CD4-positive, alpha-beta memory T cell (primary cell): ENCODE measurements at regions of chr4 and their contacts with region 1.

Region 1: GRCh38 chr4:38663801-38664705 is at the start of gene KLF3:
- DNase-seq: peak; percentile 93 to 96 (median 94)
- H3K4me3 ChIP-seq: peak within 1 kb of the TSS; percentile 83 to 92
- H3K4me3 Mint-ChIP-seq: peak within 1 kb of the TSS; percentile 89 to 100 (median 98)
- H3K27ac ChIP-seq: peak within 1 kb of the TSS; percentile 92
- H3K27ac Mint-ChIP-seq: peak within 1 kb of the TSS; percentile 91 to 100 (median 99)
- H3K4me1 ChIP-seq: peaks cover 46% of the 10 kb centered on the region
- H3K4me1 Mint-ChIP-seq: peaks cover 40 to 80% (median 56%) of the 10 kb centered on the region in 4 donors
- H3K27me3 ChIP-seq: no peaks in the 10 kb centered on the region
- H3K27me3 Mint-ChIP-seq: no peaks in the 10 kb centered on the region
- total RNA-seq, gene KLF3: 119 to 122 TPM

Region 2: DNA sequence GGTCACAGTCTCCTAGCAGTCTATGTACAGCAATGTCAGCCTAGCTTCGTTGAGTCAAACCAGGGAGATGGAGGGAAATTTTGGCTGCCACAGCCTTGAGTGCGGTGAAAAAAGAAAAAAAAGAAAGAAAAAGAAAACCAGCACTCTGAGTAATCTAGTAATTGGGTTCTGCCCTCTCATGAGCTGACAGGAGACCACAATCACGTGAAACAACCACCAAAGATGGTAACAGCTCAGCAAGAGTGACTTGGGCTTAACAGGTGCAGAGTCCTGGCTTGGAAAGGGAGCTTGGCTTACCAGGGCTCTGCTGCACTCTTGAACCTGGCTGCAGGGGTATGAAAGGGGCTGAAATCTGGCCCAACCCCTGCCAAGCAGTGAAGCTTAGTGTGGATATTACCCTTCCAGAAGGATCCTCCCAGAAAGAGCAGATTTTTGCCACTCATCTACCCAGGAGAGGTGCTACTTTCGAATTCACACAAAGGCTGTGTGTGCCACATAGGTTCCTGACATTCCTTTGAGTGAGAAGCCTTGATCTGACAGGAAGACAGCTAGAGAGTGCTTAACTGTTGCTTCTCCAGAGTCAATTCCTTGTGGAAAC is 353.5 kb before region 1 on chr4:
- CTCF ChIA-PET with region 1: interaction called, 4 read pairs
- POLR2A ChIA-PET with region 1: interaction called, 70 read pairs
- intact Hi-C with region 1: no loop called
- DNase-seq: peak; percentile 83 to 91 (median 86)
- H3K4me3 ChIP-seq: peak overlapping the region in 1 of 2 donors; percentile 41
- H3K4me3 Mint-ChIP-seq: peak overlapping the region; percentile 64 to 88 (median 76)
- H3K27ac ChIP-seq: peak overlapping the region; percentile 33
- H3K27ac Mint-ChIP-seq: peak overlapping the region; percentile 84 to 96 (median 92)
- H3K4me1 ChIP-seq: peaks cover 53% of the 10 kb centered on the region
- H3K4me1 Mint-ChIP-seq: peaks cover 39 to 71% (median 54%) of the 10 kb centered on the region in 4 donors
- H3K27me3 ChIP-seq: no peaks in the 10 kb centered on the region
- H3K27me3 Mint-ChIP-seq: no peaks in the 10 kb centered on the region

Region 3: DNA sequence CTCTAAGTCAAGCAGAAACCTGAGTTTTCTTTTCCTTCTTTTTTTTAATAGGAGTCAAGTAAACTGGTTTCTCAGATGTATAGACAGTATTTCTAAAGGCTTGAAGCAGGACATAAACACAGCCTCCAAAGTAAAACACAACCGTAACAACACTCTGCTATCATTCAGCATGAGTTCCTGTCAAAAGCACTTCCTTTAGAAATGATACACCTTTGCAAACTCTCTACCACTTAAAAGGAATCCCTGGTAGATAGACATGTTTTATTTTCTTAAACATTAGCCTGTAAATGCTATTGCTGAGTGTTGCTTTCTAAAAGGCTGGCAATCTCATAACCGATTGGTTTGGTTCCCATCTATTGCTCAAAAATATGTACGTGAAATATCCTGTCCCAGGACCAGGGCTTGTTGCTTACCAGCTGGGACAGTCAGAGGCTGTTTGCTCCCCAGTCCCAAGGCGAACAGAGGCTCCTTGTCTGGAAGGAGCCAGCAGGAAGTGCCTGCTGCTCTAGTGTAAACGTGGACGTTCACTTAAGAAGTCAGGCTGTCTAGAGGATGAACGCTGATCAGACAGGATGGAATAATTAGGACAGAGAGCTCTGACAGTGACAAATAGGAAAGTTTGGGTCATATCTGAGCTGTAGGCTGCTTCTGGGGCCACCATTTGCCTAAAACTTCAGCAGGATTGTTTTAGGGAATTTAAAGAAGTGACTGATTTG is 174.0 kb before region 1 on chr4:
- CTCF ChIA-PET with region 1: interaction called, 3 read pairs
- POLR2A ChIA-PET with region 1: interaction called, 10 read pairs
- intact Hi-C with region 1: no loop called
- DNase-seq: peak in 4 of 5 donors; percentile 22 to 40 (median 34)
- H3K4me3 ChIP-seq: peak overlapping the region in 1 of 2 donors; percentile 24
- H3K4me3 Mint-ChIP-seq: peak overlapping the region; percentile 51 to 86 (median 76)
- H3K27ac ChIP-seq: peak overlapping the region; percentile 19
- H3K27ac Mint-ChIP-seq: peak overlapping the region; percentile 86 to 94 (median 93)
- H3K4me1 ChIP-seq: peaks cover 44% of the 10 kb centered on the region
- H3K4me1 Mint-ChIP-seq: peaks cover 30 to 45% (median 34%) of the 10 kb centered on the region in 4 donors
- H3K27me3 ChIP-seq: no peaks in the 10 kb centered on the region
- H3K27me3 Mint-ChIP-seq: no peaks in the 10 kb centered on the region

Region 4: DNA sequence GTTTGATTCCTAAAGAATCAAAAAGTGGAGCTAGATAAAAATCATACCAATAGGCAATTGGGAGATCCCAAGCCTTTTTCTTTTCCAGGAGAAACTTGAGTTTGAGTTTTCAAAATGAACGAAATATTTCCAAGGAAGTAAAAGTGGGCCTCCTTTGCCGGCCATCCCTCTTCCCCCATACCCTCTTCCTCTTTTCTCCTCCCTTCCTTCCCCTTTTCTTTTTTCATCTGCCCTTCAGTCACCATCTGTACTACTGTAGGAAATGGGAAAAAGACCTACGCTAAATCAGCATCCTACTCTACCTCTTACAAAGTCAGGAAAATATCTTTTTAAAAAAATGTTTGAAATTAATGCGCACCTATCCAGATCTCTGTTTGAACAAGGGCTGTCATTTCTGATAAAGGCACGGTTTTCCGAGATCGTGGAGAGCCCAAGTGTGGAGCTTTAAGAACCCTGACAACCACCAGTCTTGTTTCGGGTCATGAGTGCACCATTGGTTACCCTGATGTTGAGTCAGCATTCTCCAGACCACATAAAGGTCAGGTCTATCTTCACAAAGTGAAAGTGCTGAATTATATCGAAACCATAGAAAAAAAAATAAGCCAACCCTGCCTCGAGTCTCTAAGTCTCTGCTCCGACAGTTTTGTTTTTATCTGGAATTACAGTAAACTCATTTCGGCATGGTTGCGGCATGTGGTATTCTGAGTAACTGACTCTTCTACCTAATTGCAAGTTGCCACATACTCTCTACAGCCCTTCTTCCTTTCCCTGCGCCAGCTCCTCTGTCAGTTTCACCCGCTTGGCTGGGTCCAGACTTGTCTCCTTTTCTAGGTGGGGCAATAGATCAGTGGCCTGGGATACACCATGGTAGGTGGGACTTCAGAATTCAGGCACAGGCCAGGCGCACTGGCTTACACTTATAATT is 140.3 kb before region 1 on chr4:
- CTCF ChIA-PET with region 1: interaction called, 3 read pairs
- POLR2A ChIA-PET with region 1: interaction called, 41 read pairs
- intact Hi-C with region 1: no loop called
- DNase-seq: peak; percentile 52 to 73 (median 63)
- H3K4me3 ChIP-seq: peak overlapping the region; percentile 3 to 18
- H3K4me3 Mint-ChIP-seq: peak overlapping the region; percentile 80 to 92 (median 88)
- H3K27ac ChIP-seq: peak overlapping the region; percentile 6
- H3K27ac Mint-ChIP-seq: peak overlapping the region; percentile 77 to 93 (median 88)
- H3K4me1 ChIP-seq: peaks cover 30% of the 10 kb centered on the region
- H3K4me1 Mint-ChIP-seq: peaks cover 23 to 53% (median 39%) of the 10 kb centered on the region in 4 donors
- H3K27me3 ChIP-seq: no peaks in the 10 kb centered on the region
- H3K27me3 Mint-ChIP-seq: no peaks in the 10 kb centered on the region

Region 5: DNA sequence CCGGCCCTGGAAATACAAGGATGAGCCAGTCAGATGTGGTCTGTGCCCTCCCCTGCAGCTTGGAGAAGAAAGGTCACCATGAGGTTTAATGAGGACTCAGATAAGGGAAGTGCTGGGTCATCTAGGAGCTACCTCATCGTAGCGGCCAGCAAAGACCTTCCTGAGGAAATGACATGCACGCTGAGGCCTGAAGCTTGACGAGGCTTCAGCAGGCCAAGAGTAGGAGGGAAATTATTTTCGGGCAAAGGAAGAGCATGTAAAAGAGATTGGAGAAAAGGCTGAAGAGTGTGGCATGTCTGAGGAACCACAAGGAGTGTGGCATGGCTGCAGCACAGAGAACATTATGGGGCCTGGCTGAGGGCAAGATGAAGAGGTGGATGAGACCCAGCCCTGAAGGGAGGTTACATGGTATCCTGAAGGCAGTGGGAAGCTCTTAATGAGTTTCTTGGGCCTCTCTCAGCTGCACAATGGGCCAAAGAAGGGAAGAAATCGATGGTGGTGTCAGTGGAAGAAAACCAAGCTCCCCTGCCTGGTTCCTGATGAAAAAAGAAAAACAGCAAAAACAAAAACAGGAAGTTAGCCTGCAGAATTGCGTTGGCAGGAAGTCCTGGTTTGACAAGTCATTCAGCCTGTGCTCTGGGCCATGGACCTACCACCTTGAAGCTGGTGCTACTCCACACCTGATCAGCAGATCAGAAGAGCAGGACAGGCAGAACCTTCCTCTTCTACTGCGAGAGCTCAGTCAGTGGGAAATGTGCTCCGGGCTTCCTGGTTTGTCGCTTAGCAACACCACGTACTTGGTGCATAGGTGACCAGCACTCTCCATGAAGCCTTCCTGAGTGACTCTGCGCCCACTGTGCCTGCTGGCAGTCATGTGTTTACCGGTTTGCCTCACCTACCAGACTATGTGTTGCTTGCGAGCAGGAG is 134.6 kb before region 1 on chr4:
- CTCF ChIA-PET with region 1: interaction called, 3 read pairs
- POLR2A ChIA-PET with region 1: interaction called, 41 read pairs
- intact Hi-C with region 1: no loop called
- DNase-seq: peak; percentile 55 to 75 (median 62)
- H3K4me3 ChIP-seq: peak overlapping the region in 1 of 2 donors; percentile 1
- H3K4me3 Mint-ChIP-seq: peak overlapping the region in 7 of 8 donors; percentile 49 to 81 (median 58)
- H3K27ac ChIP-seq: peak overlapping the region; percentile 3
- H3K27ac Mint-ChIP-seq: peak overlapping the region; percentile 82 to 92 (median 88)
- H3K4me1 ChIP-seq: peaks cover 43% of the 10 kb centered on the region
- H3K4me1 Mint-ChIP-seq: peaks cover 23 to 69% (median 42%) of the 10 kb centered on the region in 4 donors
- H3K27me3 ChIP-seq: no peaks in the 10 kb centered on the region
- H3K27me3 Mint-ChIP-seq: no peaks in the 10 kb centered on the region